Mammary epithelial cell (primary cell): ENCODE measurements at regions of chr22 and their contacts with region 1.

Region 1: DNA sequence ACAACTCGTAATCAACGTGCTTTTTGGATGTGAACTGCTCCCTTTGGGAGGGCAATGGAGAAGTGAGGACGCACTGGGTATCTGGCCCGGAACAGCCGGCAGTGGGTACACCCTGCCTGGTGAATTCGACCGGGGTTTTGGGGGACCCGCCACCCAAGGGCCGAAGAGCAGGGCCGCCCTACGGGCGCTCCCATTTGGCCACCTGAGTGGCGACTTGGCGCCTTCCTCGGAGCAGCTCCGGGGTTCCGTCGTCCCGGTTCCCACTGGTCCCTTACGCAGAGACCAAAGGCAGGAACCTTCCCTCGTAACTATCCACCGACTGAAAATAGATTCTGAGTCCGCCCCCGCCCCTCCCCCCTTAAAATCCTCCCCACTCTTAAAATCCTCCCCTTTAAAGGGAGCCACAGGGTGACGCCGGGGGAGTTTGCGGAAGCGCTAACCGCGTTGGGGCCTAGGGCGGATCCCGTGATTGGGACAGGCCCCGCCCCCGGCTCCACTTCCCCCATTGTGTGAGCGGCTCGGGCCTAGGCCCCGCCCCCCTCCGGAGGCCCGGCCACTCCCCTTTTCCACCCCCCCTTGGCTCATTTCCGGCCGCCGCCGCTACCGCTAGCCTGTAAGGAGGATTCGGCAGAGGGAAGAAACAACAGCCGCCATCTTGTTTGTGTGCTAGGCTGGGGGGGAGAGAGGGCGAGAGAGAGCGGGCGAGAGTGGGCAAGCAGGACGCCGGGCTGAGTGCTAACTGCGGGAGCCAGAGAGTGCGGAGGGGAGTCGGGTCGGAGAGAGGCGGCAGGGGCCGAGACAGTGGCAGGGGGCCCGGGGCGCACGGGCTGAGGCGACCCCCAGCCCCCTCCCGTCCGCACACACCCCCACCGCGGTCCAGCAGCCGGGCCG is 1.0 kb upstream of the EP300 start:
- DNase-seq: peak; percentile 98
- H3K4me3 ChIP-seq: peak overlapping the region; percentile 92 to 98 (median 96)
- H3K27ac ChIP-seq: peak overlapping the region; percentile 88
- H3K4me1 ChIP-seq: peaks cover 6% of the 10 kb centered on the region
- H3K27me3 ChIP-seq: no peaks in the 10 kb centered on the region
- CTCF ChIP-seq: no peak

Region 2: GRCh38 chr22:40950962-40951794 is 140.2 kb before region 1 on chr22 and contains the start of gene RBX1:
- CTCF ChIA-PET with region 1: no interaction called
- dilution Hi-C with region 1: no loop called
- in situ Hi-C with region 1: loop called (anchors 5 to 25 kb)
- intact Hi-C with region 1: loop called (anchors 1 kb)
- DNase-seq: peak; percentile 97
- H3K4me3 ChIP-seq: peak within 1 kb of the TSS; percentile 89 to 99 (median 99)
- H3K27ac ChIP-seq: peak within 1 kb of the TSS; percentile 98
- H3K4me1 ChIP-seq: peaks cover 11% of the 10 kb centered on the region
- H3K27me3 ChIP-seq: no peaks in the 10 kb centered on the region
- CTCF ChIP-seq: no peak
- total RNA-seq, gene RBX1: 34.5 to 43.6 TPM

Region 3: GRCh38 chr22:41021613-41022454 is 69.5 kb before region 1 on chr22:
- CTCF ChIA-PET with region 1: no interaction called
- dilution Hi-C with region 1: no loop called
- in situ Hi-C with region 1: no loop called
- intact Hi-C with region 1: loop called (anchors 1 kb)
- DNase-seq: peak; percentile 53
- H3K4me3 ChIP-seq: peak overlapping the region; percentile 47 to 65 (median 56)
- H3K27ac ChIP-seq: peak overlapping the region; percentile 69
- H3K4me1 ChIP-seq: peaks cover 7% of the 10 kb centered on the region
- H3K27me3 ChIP-seq: no peaks in the 10 kb centered on the region
- CTCF ChIP-seq: no peak

Region 4: DNA sequence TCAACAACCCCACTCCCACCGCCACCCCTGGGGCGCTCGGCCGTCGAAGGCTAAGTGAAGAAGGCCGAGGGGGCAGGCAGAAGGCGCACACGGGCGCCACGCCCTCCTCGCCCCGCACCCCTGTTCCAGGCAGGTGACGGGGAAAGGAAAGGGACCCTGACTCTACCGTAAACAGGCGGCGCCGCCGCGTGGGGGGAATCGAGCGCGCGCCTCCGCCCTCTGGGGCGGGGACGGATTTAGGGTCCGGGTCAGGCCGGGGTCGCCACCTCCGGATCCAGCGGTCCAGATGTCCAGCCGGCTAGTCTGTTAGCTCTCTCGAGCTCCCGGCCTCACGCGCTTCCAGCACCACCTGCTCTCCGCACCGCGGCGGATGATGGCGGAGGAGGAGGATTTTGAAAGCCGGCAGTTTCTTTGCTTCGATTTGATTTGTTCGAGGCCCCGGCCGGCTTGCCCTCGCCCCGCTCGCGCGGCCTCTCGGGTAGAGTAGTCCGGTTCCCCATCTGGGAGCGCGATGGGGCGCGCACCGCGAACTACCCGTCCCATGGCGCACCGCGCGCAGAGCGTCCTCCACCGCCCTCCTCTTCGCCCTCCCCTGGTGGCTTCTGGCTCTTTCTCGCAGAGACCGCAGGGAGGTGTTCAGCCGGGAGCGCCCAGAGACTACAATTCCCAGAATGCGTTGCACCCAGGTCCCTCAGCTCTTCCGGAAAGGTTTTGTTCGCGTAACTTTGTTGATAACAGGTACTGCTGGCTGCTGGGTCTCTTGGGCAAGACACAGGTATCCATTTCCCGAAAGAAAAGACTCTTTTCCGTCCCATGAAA is 194.7 kb after region 1 on chr22 and contains the start of gene RANGAP1:
- CTCF ChIA-PET with region 1: no interaction called
- dilution Hi-C with region 1: no loop called
- in situ Hi-C with region 1: no loop called
- intact Hi-C with region 1: loop called (anchors 5 kb)
- DNase-seq: peak; percentile 99
- H3K4me3 ChIP-seq: peak within 1 kb of the TSS; percentile 79 to 90 (median 88)
- H3K27ac ChIP-seq: peak within 1 kb of the TSS; percentile 90
- H3K4me1 ChIP-seq: peaks cover 58% of the 10 kb centered on the region
- H3K27me3 ChIP-seq: no peaks in the 10 kb centered on the region
- CTCF ChIP-seq: peak in 1 of 2 donors; percentile 36
- total RNA-seq, gene RANGAP1: 47.8 to 127 TPM